ENCODE measurements at regions of chr17 and their contacts with region 1.

Region 1: DNA sequence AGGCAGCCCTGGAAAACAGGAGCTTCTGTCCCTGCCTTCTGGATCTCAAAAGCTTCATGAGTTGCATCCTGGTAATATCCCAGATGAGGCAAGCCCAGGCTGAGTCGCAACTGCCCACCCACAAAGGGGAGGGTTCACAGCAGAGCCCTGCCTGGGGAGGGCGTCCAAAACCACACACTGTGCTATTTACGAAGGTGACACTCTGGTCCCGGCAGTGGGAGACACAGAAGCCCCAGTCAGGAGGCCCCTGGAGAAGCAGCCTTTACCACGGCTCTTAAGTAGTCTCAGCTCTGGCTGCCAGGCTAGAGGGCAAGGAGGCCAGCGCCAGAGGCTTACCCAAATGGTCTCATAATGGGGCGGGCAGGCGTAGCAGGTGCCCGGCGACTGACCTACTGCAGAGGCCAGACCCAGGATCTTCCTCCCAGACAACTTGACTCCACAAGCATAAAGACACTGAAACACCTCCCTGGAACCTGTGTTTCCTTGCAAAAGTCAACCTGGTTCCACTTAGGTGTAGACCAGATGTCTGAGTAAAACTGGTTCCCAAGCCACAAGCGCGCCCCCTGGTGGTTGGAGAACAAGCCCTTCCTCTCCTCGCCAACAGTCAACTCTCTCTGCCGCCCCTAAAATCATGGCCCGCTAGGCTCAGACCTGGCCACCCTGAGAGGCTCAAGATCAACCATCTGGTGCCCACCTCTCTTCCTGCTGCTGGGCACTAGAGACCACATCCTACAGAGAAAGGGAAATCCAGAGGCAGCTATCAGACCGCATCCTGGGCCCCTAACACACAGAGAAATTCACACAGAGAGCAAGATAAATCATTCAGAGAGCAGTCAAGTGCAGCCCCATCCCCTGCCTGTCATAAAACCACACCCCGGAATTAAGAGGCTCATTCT is 5.2 kb downstream of the AXIN2 start:
- DNase-seq: peak; percentile 85 to 89
- H3K4me3 ChIP-seq: peak overlapping the region; percentile 86
- H3K4me3 Mint-ChIP-seq: no peak overlapping the region
- H3K27ac Mint-ChIP-seq: no peak overlapping the region
- H3K4me1 ChIP-seq: peaks cover 33% of the 10 kb centered on the region
- H3K4me1 Mint-ChIP-seq: peaks cover 14% of the 10 kb centered on the region
- H3K27me3 ChIP-seq: no peaks in the 10 kb centered on the region
- H3K27me3 Mint-ChIP-seq: no peaks in the 10 kb centered on the region
- CTCF ChIP-seq: peak; percentile 88 to 95

Region 2: DNA sequence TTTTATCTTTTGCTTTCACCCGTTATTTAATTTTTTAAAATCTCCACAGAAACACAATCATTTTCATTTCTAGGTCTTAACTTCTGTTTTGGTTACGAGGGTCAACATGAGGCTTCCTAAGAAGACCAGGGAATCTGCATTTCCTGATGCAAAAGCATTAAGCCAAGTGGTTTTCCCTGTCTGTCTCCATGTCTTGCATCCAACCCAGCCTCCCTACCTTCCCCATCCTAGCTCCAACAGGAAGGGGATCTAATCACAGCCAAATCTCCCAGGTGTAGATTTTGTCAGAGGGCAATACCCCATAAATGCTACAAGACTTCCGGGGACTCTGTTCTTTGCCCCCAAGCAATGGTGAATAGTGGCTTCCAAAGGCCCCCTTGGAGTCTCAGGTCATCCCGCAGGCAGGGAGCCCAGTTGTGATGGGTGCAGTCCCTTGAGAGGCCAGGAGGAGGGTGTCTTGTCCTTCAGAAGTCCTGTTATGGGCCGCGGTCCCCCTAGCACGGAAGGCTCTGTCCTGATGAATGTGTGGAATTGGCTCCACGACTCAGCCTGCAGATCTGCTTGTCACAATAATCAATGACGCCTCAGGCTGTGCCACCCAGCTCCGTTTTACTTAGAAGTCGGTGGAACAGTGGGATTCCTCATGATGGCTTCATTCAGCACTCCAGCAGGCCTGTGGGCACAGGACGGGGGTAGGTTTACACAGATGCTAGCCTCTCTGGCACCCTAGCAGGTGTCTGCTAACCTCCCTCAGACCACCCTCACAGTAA is 278.0 kb before region 1 on chr17:
- CTCF ChIA-PET with region 1: no interaction called
- POLR2A ChIA-PET with region 1: no interaction called
- intact Hi-C with region 1: loop called (anchors 1 kb)
- DNase-seq: peak; percentile 81 to 82
- H3K4me3 ChIP-seq: no peak overlapping the region
- H3K4me3 Mint-ChIP-seq: peak overlapping the region; percentile 39
- H3K27ac Mint-ChIP-seq: no peak overlapping the region
- H3K4me1 ChIP-seq: peaks cover 14% of the 10 kb centered on the region; the same call in 1 of the 2 replicates
- H3K4me1 Mint-ChIP-seq: peaks cover 9% of the 10 kb centered on the region
- H3K27me3 ChIP-seq: no peaks in the 10 kb centered on the region
- H3K27me3 Mint-ChIP-seq: peaks cover 4% of the 10 kb centered on the region
- CTCF ChIP-seq: peak; percentile 82 to 89

Region 3: DNA sequence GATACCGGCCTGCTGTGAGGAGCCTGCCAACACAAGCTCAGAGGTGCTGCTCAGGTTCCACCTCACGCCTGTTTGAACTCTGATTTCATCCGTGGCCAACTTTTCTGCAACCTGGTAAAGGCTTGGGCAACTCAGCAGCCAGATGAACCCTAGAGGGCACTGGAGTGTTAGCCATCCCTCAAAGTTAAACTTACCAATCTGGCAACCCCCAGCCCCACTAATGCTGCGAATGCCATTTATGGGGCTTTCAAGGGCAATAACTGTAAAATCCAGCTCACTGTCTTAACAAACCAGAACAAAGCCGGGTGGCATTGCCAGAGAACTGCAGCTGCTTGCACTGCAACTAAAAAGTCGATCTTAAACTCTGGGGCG is 100.3 kb before region 1 on chr17:
- CTCF ChIA-PET with region 1: no interaction called
- POLR2A ChIA-PET with region 1: no interaction called
- intact Hi-C with region 1: loop called (anchors 1 kb)
- DNase-seq: peak in 1 of 2 experiments; percentile 61
- H3K4me3 ChIP-seq: no peak overlapping the region
- H3K4me3 Mint-ChIP-seq: no peak overlapping the region
- H3K27ac Mint-ChIP-seq: no peak overlapping the region
- H3K4me1 ChIP-seq: peaks cover 18% of the 10 kb centered on the region
- H3K4me1 Mint-ChIP-seq: peaks cover 32% of the 10 kb centered on the region
- H3K27me3 ChIP-seq: no peaks in the 10 kb centered on the region
- H3K27me3 Mint-ChIP-seq: no peaks in the 10 kb centered on the region
- CTCF ChIP-seq: peak; percentile 46 to 72

Region 4: DNA sequence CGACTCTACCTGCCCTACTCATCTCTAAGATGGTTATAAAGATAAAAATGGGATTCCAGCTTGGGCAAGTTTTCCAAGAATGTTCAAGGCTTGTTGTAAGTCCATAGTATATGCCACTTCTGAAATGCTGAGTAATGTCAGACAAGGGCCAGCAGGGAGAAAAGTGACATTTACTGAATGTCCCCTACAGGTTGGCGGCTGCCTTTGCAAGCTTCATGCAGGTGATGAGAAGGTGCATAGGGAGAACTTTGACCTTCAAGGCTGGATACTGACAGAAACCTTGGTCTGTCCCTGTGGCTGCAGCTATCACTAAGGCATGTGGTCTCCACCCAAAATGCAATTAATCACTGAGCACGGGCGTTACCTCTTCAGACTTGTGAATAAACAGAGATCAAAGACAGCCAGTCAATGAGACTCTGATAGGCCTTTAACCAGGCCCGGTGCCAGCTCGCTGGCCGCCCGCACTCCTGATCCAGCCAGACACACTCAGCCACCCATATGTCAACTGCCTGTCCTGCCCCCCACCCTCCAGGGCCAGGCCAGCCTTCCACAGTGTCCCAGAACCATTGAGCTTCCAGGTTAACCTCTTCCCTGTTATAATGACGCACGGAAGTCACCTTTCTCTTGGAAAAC is 32.0 kb after region 1 on chr17:
- CTCF ChIA-PET with region 1: interaction called, 5 read pairs
- POLR2A ChIA-PET with region 1: interaction called, 6 read pairs
- intact Hi-C with region 1: loop called (anchors 1 kb)
- DNase-seq: peak; percentile 90 to 96
- H3K4me3 ChIP-seq: no peak overlapping the region
- H3K4me3 Mint-ChIP-seq: peak overlapping the region; percentile 5
- H3K27ac Mint-ChIP-seq: peak overlapping the region; percentile 99
- H3K4me1 ChIP-seq: peaks cover 61% of the 10 kb centered on the region
- H3K4me1 Mint-ChIP-seq: peaks cover 50% of the 10 kb centered on the region
- H3K27me3 ChIP-seq: no peaks in the 10 kb centered on the region
- H3K27me3 Mint-ChIP-seq: no peaks in the 10 kb centered on the region
- CTCF ChIP-seq: peak; percentile 71 to 73

Region 5: GRCh38 chr17:65850486-65850885 is 294.2 kb after region 1 on chr17:
- CTCF ChIA-PET with region 1: no interaction called
- POLR2A ChIA-PET with region 1: no interaction called
- intact Hi-C with region 1: no loop called
- DNase-seq: no peak
- H3K4me3 ChIP-seq: no peak overlapping the region
- H3K4me3 Mint-ChIP-seq: no peak overlapping the region
- H3K27ac Mint-ChIP-seq: no peak overlapping the region
- H3K4me1 ChIP-seq: no peaks in the 10 kb centered on the region; the same call in 1 of the 2 replicates
- H3K4me1 Mint-ChIP-seq: peaks cover 10% of the 10 kb centered on the region
- H3K27me3 ChIP-seq: no peaks in the 10 kb centered on the region
- H3K27me3 Mint-ChIP-seq: no peaks in the 10 kb centered on the region
- CTCF ChIP-seq: no peak

Region 6: DNA sequence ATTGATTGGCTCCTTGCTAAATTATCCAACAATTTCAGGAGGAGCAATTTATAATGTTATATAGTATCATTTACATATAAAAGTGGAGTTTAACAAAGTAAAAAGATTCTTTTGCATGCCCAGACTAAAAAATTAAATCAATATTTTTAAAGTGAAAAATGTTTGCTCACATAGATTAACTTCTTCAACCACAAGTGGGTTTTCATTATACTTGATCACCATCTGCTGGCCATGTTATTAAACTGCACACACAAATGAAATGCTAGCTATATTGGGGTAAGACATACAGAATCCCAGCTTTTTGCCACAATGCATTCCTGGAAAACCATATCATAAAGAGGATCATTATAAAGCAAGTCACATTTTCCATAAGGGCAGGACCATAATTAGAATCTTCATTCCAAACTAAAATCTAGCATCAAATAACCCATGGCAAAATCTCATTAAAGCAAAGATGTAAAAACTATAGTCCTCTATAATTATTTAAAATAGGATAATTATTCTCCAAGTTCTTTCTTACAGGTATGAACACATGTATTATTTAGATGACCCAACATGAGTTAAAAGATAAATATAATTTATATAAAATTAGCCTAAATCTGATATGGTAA is 609.4 kb after region 1 on chr17:
- CTCF ChIA-PET with region 1: no interaction called
- POLR2A ChIA-PET with region 1: no interaction called
- intact Hi-C with region 1: loop called (anchors 5 kb)
- DNase-seq: peak in 1 of 2 experiments; percentile 55
- H3K4me3 ChIP-seq: no peak overlapping the region
- H3K4me3 Mint-ChIP-seq: no peak overlapping the region
- H3K27ac Mint-ChIP-seq: no peak overlapping the region
- H3K4me1 ChIP-seq: no peaks in the 10 kb centered on the region
- H3K4me1 Mint-ChIP-seq: no peaks in the 10 kb centered on the region
- H3K27me3 ChIP-seq: no peaks in the 10 kb centered on the region
- H3K27me3 Mint-ChIP-seq: no peaks in the 10 kb centered on the region
- CTCF ChIP-seq: peak; percentile 63 to 76

Measured in Caco-2 (cell line).